ENCODE measurements at regions of chr12 and their contacts with region 1.

Region 1: DNA sequence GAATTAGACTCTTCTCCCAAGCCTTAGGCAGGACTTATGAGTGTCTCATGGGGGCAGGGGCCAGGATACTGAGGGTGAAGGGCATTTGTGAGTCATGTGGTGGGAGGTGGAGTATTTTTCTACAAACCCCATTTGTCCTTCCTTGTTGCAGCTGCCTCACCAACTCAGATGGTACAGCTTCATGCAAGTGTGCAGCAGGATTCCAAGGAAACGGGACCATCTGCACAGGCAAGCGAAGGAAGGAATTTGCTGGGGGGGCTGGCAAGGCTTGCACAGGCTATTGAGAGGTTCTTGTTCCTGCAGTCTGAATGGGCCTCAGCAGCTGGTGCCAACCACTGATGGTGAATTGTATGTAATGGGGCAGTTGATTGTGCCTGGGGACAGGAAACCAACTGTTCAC is 125.1 kb downstream of the STAB2 start:
- DNase-seq: no peak
- ATAC-seq: peak in 1 of 4 donors; percentile 45
- H3K4me3 ChIP-seq: no peak overlapping the region
- H3K27ac ChIP-seq: no peak overlapping the region
- H3K4me1 ChIP-seq: peaks cover 0 to 7% (median 0%) of the 10 kb centered on the region in 12 donors
- H3K27me3 ChIP-seq: no peaks in the 10 kb centered on the region
- CTCF ChIP-seq: no peak
- POLR2A ChIP-seq: no peak

Region 2: GRCh38 chr12:104147346-104147745 is 435.1 kb after region 1 on chr12:
- intact Hi-C with region 1: loop called in 1 of 10 experiments (anchors 10 kb)
- DNase-seq: no peak
- ATAC-seq: peak in 2 of 4 donors; percentile 26 to 54
- H3K4me3 ChIP-seq: no peak overlapping the region
- H3K27ac ChIP-seq: no peak overlapping the region
- H3K4me1 ChIP-seq: no peaks in the 10 kb centered on the region
- H3K27me3 ChIP-seq: no peaks in the 10 kb centered on the region
- CTCF ChIP-seq: no peak
- POLR2A ChIP-seq: no peak